ENCODE measurements at regions of chr2 and their contacts with region 1.

Region 1: DNA sequence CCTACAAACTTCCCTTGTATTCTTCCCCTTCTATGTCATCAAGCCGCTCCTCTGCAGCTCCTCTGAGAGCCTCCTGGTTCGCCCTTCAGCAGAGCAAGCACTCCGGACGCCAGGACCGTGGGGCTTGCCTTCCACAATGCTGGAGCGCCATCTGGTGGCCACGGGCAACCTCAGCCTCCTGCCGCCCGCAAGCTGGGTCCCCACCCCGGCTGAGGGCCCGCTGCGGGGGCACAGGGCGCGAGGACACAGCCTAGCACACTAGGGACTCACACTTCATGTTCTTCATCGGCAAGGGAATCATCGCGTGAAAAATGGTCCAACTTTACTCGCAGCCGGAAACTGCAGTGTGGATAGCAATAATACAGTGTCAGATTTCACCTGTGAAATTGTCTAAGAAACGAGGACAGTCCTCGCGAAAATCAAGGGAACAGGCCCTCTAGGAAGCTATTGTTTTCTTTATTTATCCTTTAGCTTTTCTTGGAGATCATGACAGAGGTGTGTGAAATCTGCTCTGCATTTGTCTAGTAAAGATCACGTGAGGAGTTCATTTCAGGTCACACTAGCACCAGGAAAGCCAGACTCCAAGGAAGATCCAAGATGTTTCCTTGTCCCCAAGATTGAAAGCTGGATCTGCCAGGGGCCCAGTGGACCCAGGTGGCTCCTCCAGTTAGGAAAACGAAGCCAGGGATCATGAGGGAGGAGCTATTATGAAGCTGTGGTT is 5.8 kb downstream of the PRLH start:
- DNase-seq: peak; percentile 90 to 96 (median 92)
- H3K4me3 ChIP-seq: no peak overlapping the region
- H3K27ac ChIP-seq: no peak overlapping the region
- H3K4me1 ChIP-seq: peaks cover 0 to 7% (median 0%) of the 10 kb centered on the region in 3 donors
- H3K27me3 ChIP-seq: no peaks in the 10 kb centered on the region
- CTCF ChIP-seq: peak; percentile 99

Region 2: GRCh38 chr2:237383991-237384671 is 188.1 kb before region 1 on chr2:
- intact Hi-C with region 1: no loop called
- DNase-seq: no peak
- H3K4me3 ChIP-seq: no peak overlapping the region
- H3K27ac ChIP-seq: no peak overlapping the region
- H3K4me1 ChIP-seq: no peaks in the 10 kb centered on the region
- H3K27me3 ChIP-seq: no peaks in the 10 kb centered on the region
- CTCF ChIP-seq: no peak

Region 3: GRCh38 chr2:237514474-237515130 is 57.6 kb before region 1 on chr2:
- intact Hi-C with region 1: loop called (anchors 5 kb)
- DNase-seq: no peak
- H3K4me3 ChIP-seq: no peak overlapping the region
- H3K27ac ChIP-seq: no peak overlapping the region
- H3K4me1 ChIP-seq: no peaks in the 10 kb centered on the region
- H3K27me3 ChIP-seq: no peaks in the 10 kb centered on the region
- CTCF ChIP-seq: no peak

Region 4: GRCh38 chr2:237774802-237775553 is 202.8 kb after region 1 on chr2:
- intact Hi-C with region 1: no loop called
- DNase-seq: peak in 4 of 5 donors; percentile 33 to 62 (median 60)
- H3K4me3 ChIP-seq: no peak overlapping the region
- H3K27ac ChIP-seq: no peak overlapping the region
- H3K4me1 ChIP-seq: no peaks in the 10 kb centered on the region
- H3K27me3 ChIP-seq: no peaks in the 10 kb centered on the region
- CTCF ChIP-seq: peak; percentile 52